Tibial artery (tissue), 4 donors: ENCODE measurements at regions of chr15 and their contacts with region 1.

Region 1: DNA sequence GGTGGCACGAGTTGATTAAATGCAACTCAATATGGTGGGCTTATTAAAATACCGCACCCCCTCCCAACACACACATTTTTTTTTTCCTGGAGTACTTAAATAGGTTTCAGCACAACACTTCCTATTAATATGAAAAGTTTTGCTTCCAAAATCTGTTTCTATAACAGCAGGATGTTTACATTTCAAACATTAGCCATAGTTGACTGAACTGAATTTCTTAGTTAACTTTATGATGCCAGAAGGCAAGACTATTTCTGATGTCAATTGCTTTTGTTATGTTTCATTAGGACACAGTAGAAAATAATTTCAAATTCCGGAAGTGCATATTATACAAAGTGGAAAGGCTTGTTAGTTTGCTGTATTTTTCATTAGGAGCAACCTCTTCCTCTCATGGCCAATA is 104.7 kb downstream of the UACA start:
- DNase-seq: no peak
- H3K4me3 ChIP-seq: no peak overlapping the region
- H3K27ac ChIP-seq: no peak overlapping the region
- H3K4me1 ChIP-seq: no peaks in the 10 kb centered on the region
- H3K27me3 ChIP-seq: no peaks in the 10 kb centered on the region
- CTCF ChIP-seq: no peak

Region 2: DNA sequence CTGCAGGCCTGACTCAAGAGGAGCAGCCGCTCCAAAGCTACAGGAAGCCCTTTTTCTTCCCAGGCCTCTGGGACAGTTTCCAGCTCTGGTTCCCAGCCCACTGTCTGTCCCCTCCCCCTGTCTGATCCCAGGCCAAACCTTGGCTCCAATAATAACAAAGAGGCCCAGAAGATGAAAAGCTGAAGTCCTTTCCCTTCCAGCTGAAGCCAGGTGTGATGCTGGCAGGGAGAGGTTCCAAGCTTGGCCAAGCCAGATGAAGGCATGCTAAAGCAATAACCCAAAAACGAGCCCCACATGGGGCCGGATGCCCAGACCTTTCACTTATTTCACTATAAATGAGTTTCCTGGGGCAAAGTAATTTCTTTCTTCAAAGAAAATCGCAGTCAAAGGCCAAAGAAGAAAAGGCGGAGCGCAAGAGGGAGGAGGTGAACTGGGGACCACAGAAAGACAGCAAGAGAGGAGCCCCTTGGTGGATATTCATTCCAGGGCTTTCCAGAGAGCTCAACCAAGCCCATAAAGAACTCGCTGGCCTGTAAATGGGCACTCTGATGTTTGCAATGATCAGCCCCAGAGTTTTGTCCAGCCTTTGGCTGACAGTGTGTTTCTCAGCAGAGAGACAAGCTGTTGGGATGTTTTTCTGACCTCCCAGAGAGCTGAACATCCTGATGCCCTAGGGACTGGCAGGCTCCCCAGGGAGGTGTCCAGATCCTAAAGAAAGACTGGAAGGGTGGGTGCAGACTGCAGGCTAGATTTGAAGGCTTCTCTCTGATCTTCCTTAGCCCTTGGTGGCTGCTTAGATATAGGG is 52.8 kb before region 1 on chr15:
- intact Hi-C with region 1: no loop called
- DNase-seq: peak in 1 of 2 donors; percentile 76
- H3K4me3 ChIP-seq: no peak overlapping the region
- H3K27ac ChIP-seq: peak overlapping the region; percentile 4 to 22
- H3K4me1 ChIP-seq: peaks cover 0 to 34% (median 22%) of the 10 kb centered on the region in 4 donors
- H3K27me3 ChIP-seq: no peaks in the 10 kb centered on the region
- CTCF ChIP-seq: no peak

Region 3: DNA sequence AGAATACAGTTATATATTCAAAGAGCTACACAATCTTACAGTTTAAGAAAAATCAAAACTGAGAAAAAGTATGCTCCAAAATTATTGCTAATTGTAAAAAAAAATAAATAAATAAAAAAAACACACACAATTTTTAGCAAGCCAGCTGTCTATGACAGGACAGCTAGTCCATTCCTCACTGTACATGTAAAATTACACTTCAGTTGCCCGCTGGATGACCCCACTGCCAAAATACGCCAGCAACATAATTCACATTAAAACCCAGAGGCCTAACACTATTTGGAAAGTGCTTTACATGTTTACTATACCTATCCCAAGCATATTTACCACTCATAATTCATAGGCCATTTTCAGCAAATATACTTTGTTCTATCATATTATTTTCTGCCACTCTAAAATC is 1453.5 kb after region 1 on chr15:
- intact Hi-C with region 1: loop called (anchors 5 kb)
- DNase-seq: no peak
- H3K4me3 ChIP-seq: no peak overlapping the region
- H3K27ac ChIP-seq: no peak overlapping the region
- H3K4me1 ChIP-seq: peaks cover 0 to 42% (median 9%) of the 10 kb centered on the region in 4 donors
- H3K27me3 ChIP-seq: no peaks in the 10 kb centered on the region
- CTCF ChIP-seq: no peak